ENCODE measurements at regions of chr6 and their contacts with region 1.

Region 1: GRCh38 chr6:26031595-26032339 is 55.5 kb upstream of the HFE start:
- H3K4me3 ChIP-seq: peak overlapping the region; percentile 71
- H3K27ac ChIP-seq: peak overlapping the region; percentile 63
- H3K4me1 ChIP-seq: peaks cover 12% of the 10 kb centered on the region
- CTCF ChIP-seq: peak; percentile 85

Region 2: GRCh38 chr6:26003102-26003694 is 28.6 kb before region 1 on chr6:
- CTCF ChIA-PET with region 1: interaction called, 198 read pairs
- POLR2A ChIA-PET with region 1: interaction called, 5 read pairs
- H3K4me3 ChIP-seq: no peak overlapping the region
- H3K27ac ChIP-seq: no peak overlapping the region
- H3K4me1 ChIP-seq: no peaks in the 10 kb centered on the region
- CTCF ChIP-seq: no peak

Region 3: DNA sequence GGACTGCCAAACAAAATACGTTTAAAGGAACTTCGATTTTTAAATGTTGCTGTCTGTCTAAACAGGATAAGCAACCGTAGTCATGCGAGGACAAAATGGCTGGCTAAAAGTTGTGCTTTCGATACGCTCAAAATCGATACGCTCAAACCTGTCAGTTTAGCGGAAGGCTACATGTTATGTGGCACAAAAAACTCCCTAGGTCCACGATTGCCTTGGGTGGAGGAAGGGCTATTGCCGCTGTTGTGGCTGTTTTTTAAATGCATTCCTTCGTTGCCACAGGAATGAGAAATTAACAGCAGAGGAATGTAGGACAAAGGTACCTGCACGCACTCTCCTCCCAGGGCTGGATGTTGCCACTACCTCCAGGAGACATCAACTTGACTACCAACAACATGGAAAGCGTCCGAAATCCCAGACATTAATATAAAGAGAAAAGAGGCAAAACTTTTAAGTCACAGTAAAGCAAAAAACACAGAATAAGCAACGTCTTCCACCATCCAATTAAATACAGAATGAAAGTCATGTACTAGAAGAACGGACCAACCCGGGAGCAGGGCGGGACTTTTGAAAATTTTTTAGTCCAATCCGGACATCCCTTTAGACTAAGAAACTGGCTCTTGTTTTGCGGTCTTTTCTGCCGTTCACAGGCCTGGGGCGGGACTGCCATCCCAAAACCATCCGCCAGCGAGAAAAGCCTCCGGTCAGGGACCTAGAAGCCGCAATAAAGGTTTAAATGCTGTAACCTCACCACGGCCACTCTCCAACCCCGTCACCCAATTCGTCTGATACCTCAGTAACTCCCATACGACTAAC is 23.3 kb after region 1 on chr6:
- CTCF ChIA-PET with region 1: interaction called, 63 read pairs
- POLR2A ChIA-PET with region 1: interaction called, 100 read pairs
- H3K4me3 ChIP-seq: peak overlapping the region; percentile 85
- H3K27ac ChIP-seq: peak overlapping the region; percentile 81
- H3K4me1 ChIP-seq: peaks cover 5% of the 10 kb centered on the region; the same call in 1 of the 2 replicates
- CTCF ChIP-seq: no peak

Region 4: GRCh38 chr6:26097268-26097875 is 65.6 kb after region 1 on chr6:
- CTCF ChIA-PET with region 1: interaction called, 64 read pairs
- POLR2A ChIA-PET with region 1: interaction called, 51 read pairs
- H3K4me3 ChIP-seq: no peak overlapping the region
- H3K27ac ChIP-seq: no peak overlapping the region
- H3K4me1 ChIP-seq: no peaks in the 10 kb centered on the region
- CTCF ChIP-seq: no peak

Region 5: DNA sequence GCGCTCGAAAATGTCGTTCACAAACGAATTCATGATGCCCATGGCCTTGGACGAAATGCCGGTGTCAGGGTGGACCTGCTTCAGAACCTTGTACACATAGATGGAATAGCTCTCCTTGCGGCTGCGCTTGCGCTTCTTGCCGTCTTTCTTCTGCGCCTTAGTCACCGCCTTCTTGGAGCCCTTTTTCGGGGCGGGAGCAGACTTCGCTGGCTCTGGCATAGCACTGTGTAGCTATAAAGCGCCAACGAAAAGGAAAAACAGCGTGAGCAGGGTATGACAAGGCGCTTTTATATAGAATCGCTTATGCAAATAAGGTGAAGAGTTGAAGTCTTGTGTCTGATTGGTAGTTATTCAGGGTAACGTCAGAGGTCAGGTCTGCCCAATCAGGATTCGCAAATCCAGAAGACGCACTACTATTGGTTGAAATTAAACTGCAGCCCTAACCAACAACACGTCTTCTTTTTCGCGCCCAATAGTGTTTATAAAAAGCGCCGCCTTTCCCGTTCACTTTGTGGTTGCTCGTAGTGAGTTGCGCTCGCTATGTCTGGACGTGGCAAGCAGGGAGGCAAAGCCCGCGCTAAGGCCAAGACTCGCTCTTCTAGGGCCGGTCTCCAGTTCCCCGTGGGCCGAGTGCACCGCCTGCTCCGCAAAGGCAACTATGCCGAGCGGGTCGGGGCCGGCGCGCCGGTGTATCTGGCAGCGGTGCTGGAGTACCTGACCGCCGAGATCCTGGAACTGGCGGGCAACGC is 1100.9 kb after region 1 on chr6:
- CTCF ChIA-PET with region 1: no interaction called
- POLR2A ChIA-PET with region 1: interaction called, 16 read pairs
- H3K4me3 ChIP-seq: peak overlapping the region; percentile 71
- H3K27ac ChIP-seq: peak overlapping the region; percentile 95
- H3K4me1 ChIP-seq: peaks cover 10% of the 10 kb centered on the region
- CTCF ChIP-seq: no peak

Measured in HEK293 (cell line).